B cell (primary cell): ENCODE measurements at regions of chr7 and their contacts with region 1.

Region 1: GRCh38 chr7:151759591-151760042 is 117.3 kb downstream of the PRKAG2 start:
- DNase-seq: peak; percentile 69
- ATAC-seq: peak; percentile 70
- H3K4me3 ChIP-seq: no peak overlapping the region
- H3K4me3 Mint-ChIP-seq: no peak overlapping the region
- H3K27ac ChIP-seq: no peak overlapping the region
- H3K27ac Mint-ChIP-seq: peak overlapping the region; percentile 53
- H3K4me1 ChIP-seq: peaks cover 0 to 7% of the 10 kb centered on the region in 2 donors
- H3K4me1 Mint-ChIP-seq: peaks cover 16% of the 10 kb centered on the region
- H3K27me3 ChIP-seq: no peaks in the 10 kb centered on the region
- H3K27me3 Mint-ChIP-seq: no peaks in the 10 kb centered on the region
- CTCF ChIP-seq: peak; percentile 86

Region 2: DNA sequence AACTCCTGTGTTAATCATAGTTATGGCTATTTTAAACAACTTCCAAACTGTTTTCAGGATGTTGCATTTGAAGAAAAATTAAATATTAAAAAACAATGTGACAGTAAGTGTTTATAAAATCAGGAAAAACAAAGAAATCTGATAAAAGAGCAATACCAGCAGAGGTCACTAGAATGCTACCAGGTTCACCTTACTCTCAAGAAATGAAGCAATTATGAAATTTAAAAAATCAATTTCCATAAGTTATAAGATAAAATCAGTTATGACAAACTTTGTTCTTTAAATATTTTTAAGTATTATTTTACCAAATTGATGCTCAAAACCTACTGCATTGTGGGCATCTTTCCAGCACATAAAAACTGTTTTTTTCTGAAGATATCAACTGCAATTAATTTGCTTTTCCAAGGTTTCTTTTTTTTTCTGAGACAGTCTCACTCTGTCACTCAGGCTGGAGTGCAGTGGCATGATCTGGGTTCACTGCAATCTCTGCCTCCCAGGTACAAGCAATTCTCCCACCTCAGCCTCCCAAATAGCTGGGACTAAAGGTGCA is 189.2 kb before region 1 on chr7:
- CTCF ChIA-PET with region 1: interaction called, 22 read pairs
- POLR2A ChIA-PET with region 1: no interaction called
- intact Hi-C with region 1: loop called (anchors 1 kb)
- DNase-seq: no peak
- ATAC-seq: no peak
- H3K4me3 ChIP-seq: no peak overlapping the region
- H3K4me3 Mint-ChIP-seq: no peak overlapping the region
- H3K27ac ChIP-seq: no peak overlapping the region
- H3K27ac Mint-ChIP-seq: no peak overlapping the region
- H3K4me1 ChIP-seq: no peaks in the 10 kb centered on the region
- H3K4me1 Mint-ChIP-seq: no peaks in the 10 kb centered on the region
- H3K27me3 ChIP-seq: no peaks in the 10 kb centered on the region
- H3K27me3 Mint-ChIP-seq: no peaks in the 10 kb centered on the region
- CTCF ChIP-seq: peak; percentile 45

Region 3: DNA sequence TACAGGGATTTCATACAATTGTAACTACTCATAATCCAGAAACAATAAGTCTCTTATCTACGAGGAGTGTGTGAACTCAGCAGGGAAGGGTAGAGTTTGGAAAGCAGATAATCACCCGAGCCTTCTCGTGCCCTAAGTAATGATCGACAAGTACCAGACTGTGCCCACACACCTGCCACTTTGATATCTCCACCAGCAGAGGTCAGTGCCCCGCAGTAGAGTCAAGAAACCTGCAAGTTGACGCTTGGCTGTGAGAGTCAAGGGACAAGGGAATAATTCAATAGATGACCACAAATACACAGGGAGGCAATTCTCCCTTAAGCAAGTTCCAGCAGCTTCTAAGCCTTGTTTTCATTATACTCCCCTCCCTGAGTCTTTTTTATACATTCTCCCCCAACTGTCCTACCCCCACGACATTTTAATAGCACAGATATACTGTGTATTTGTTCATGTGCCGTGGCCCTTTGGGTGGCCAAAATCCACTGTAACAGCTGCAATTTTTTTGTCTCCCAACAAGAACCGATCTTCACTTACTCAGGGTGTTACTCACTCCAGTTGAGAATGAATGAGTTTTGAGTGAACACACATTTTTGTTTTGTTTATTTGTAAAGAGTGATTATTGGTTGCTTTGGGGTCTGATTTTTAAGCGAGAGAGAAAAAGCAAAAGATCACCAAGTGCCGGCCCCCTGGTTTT is 133.0 kb before region 1 on chr7:
- CTCF ChIA-PET with region 1: interaction called, 32 read pairs
- POLR2A ChIA-PET with region 1: no interaction called
- intact Hi-C with region 1: loop called (anchors 1 kb)
- DNase-seq: peak; percentile 38
- ATAC-seq: peak; percentile 54
- H3K4me3 ChIP-seq: no peak overlapping the region
- H3K4me3 Mint-ChIP-seq: no peak overlapping the region
- H3K27ac ChIP-seq: no peak overlapping the region
- H3K27ac Mint-ChIP-seq: no peak overlapping the region
- H3K4me1 ChIP-seq: peaks cover 7 to 8% of the 10 kb centered on the region in 2 donors
- H3K4me1 Mint-ChIP-seq: peaks cover 11% of the 10 kb centered on the region
- H3K27me3 ChIP-seq: no peaks in the 10 kb centered on the region
- H3K27me3 Mint-ChIP-seq: no peaks in the 10 kb centered on the region
- CTCF ChIP-seq: peak; percentile 46

Region 4: GRCh38 chr7:151736403-151736909 is 23.2 kb before region 1 on chr7:
- CTCF ChIA-PET with region 1: interaction called, 18 read pairs
- POLR2A ChIA-PET with region 1: no interaction called
- intact Hi-C with region 1: no loop called
- DNase-seq: no peak
- ATAC-seq: no peak
- H3K4me3 ChIP-seq: no peak overlapping the region
- H3K4me3 Mint-ChIP-seq: no peak overlapping the region
- H3K27ac ChIP-seq: no peak overlapping the region
- H3K27ac Mint-ChIP-seq: no peak overlapping the region
- H3K4me1 ChIP-seq: no peaks in the 10 kb centered on the region
- H3K4me1 Mint-ChIP-seq: peaks cover 11% of the 10 kb centered on the region
- H3K27me3 ChIP-seq: no peaks in the 10 kb centered on the region
- H3K27me3 Mint-ChIP-seq: no peaks in the 10 kb centered on the region
- CTCF ChIP-seq: no peak